Posterior vena cava (tissue), 2 donors: ENCODE measurements at regions of chr7 and their contacts with region 1.

Region 1: GRCh38 chr7:22854158-22855048 is 31.8 kb upstream of the TOMM7 start:
- DNase-seq: peak; percentile 98

Region 2: DNA sequence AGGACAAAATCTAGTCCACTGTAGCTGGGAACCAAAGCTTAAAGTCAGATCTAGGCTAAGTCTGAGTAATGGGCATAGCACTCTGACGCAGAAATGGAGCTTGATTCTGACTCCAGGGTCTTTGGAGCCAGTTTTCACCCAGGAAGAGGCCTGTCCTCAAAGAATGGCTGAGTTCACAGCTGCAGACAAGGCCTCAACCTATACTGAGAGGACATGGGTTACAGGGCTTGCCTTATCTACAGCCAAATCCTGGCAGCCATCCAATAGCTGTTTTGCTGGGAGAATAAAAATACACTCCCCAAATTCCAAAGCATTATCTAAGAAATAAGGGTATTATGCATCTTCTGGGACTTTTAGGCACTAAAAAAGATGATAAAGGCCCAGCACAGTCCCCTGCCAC is 652.3 kb before region 1 on chr7:
- intact Hi-C with region 1: no loop called
- DNase-seq: no peak

Region 3: DNA sequence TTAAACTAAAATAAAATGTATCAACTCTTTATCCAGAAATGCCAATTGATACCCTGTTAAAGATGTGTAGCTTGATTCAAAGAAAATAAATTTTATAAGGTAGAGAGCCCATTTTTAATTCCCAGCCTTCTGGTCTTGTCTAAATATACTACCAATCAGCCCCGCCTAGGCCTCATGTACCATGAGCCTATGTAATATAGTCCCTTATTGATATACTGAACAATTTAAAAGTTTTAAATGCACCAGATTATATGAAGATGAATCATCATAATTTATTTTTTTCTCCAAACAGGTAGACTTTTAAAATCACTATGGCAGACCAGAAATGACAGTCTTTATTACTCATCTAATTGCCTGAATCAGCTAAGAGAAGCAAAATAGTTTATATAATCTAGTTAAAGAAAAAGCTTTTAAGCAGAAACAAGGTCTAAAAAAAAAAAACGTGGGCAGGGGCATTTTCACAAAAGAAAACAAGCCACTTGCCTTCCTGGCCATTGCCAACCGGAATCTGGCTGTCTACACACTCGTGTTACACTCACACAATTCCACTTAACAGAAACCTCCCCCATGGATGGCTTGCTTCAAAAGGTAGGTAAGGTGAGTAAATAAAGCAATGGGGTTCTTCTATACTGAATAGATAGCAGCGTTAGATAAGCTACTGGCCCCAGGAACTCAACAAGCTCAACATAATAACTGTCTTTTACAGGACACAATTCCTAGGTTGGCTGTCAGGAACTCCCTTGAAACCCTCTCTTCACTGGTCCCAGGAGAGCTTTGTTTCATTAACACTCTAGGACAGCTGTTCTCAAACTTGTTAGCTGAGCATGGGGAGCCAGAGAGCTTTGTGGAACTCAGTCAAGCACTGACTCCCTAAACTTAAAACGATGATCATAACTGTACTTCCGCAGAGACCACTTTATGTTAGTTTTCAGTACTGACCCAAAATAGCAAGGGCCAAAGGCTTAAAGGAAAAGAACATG is 534.7 kb before region 1 on chr7:
- intact Hi-C with region 1: no loop called
- DNase-seq: no peak

Region 4: GRCh38 chr7:22885797-22886261 is 31.4 kb after region 1 on chr7:
- intact Hi-C with region 1: no loop called
- DNase-seq: no peak

Region 5: DNA sequence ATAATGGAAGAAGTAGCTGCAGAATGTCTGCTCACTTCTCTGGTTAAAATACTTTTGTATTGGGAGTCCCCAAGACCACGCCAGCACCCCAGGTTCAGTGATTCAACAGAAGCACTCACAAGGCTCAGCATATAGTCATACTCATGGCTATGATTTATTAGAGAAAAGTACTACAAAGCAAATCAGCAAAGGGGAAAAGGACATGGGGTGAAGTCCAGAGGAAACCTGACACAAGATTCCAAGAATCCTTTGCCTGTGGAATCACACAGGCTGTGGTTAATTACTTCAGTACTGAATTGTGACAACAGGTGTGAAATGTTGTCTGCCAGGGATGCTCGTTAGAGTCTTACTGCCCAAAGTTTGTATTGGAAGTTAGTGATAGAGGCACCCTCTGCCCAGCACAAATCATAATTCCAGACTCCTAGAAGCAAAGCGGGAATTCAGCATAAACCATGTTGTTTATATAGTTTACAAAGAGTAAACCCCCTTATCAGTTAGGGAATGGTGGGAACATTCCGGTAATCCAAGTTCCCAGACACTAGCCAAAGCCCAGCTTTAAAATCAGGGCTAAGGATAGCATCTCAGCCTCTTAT is 80.2 kb after region 1 on chr7:
- intact Hi-C with region 1: loop called in 1 of 2 experiments (anchors 2 kb)
- DNase-seq: no peak

Region 6: DNA sequence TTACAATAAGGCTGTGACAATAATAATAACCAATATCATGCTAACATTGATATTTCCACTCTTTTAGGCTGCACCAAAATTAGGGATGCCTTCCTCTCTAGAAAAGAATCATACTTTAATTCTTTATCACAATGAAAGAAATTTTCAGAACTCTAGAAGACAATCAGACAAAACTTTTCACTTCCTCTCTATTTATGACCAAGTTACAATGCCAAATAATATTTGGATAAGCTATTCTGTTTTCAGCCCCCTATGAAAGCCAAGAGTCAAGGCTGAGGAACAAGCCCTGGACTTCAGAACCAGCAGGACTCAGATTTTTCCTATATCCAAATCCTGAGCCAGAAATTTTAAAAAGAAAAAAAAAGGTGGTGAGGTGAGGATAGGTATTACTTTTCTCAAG is 154.9 kb after region 1 on chr7:
- intact Hi-C with region 1: loop called in 1 of 2 experiments (anchors 5 kb)
- DNase-seq: no peak